ENCODE measurements at regions of chr13 and their contacts with region 1.

Region 1: DNA sequence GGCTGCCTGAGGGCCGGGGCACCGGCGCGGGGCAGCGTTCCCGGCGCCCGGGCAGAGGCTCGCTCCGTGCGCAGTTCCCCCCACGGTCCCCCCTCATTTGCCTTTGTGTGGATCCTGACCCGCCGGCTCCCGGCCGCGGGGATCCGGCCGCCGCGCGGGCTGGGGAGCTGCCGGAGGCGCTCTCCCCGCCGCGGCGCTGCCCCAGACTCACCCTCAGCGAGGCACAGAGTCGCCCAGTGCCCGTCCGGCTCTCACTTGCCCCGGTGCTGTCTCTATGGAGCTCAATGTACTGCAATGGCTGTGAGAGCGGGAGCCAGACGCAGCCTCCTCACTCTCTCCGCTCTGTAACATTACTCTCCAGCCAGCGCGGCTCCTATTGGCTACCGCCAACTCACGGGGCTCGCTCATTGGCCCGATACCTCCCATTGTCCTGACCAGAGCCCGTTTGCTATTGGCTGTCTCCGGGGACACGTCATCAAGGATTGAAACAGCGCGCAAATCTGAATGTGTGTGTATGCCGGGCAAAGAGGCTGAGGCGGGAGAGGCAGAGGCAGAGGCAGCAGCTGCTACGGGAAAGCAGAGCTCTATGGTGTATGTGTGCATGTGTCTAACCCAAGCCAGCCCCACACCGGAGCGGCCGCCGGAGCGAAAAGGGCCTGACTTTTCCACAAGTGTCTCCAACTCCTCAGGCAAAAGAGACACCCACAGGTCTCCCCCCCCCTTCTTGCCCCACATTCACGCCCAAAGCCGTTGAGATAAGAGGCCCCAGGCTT is at the start of gene HMGB1:
- DNase-seq: peak; percentile 99 to 100 (median 100)

Region 2: DNA sequence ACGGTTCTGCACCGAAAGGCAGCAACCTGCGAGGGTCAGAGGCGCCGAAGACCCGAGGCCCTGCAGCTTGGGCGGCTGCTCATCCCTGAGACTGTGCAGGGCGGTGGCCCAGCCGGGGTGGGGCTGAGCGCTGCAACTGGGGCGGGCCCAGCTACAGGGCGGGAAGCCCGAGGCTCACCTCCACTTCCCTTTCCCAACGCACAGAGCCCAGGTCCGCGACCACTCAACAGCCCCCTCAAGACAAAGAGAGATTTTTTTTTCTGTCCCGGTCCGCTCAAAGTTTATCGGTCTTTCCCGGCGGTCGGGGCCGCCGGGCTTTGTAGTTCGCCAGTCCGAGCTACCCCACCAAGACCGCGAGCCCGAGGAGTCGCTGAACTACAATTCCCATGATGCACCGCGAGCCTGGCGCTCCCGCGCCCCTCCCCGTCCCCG is 159.0 kb before region 1 on chr13:
- intact Hi-C with region 1: loop called (anchors 5 kb)
- DNase-seq: peak; percentile 91 to 99 (median 94)

Region 3: GRCh38 chr13:30422054-30422839 is 43.5 kb before region 1 on chr13 and contains the start of gene UBE2L5:
- intact Hi-C with region 1: loop called (anchors 2 kb)
- DNase-seq: peak; percentile 57 to 96 (median 72)

Region 4: GRCh38 chr13:30617315-30618185 is 151.8 kb after region 1 on chr13 and contains the start of gene USPL1:
- intact Hi-C with region 1: loop called (anchors 1 kb)
- DNase-seq: peak; percentile 94 to 99 (median 98)

Region 5: GRCh38 chr13:30802953-30803478 is 337.2 kb after region 1 on chr13:
- intact Hi-C with region 1: loop called (anchors 10 kb)
- DNase-seq: peak; percentile 76 to 98 (median 88)

Measured in posterior cingulate gyrus (tissue), 11 donors.